IMR-90 (cell line): ENCODE measurements at regions of chr4 and their contacts with region 1.

Region 1: DNA sequence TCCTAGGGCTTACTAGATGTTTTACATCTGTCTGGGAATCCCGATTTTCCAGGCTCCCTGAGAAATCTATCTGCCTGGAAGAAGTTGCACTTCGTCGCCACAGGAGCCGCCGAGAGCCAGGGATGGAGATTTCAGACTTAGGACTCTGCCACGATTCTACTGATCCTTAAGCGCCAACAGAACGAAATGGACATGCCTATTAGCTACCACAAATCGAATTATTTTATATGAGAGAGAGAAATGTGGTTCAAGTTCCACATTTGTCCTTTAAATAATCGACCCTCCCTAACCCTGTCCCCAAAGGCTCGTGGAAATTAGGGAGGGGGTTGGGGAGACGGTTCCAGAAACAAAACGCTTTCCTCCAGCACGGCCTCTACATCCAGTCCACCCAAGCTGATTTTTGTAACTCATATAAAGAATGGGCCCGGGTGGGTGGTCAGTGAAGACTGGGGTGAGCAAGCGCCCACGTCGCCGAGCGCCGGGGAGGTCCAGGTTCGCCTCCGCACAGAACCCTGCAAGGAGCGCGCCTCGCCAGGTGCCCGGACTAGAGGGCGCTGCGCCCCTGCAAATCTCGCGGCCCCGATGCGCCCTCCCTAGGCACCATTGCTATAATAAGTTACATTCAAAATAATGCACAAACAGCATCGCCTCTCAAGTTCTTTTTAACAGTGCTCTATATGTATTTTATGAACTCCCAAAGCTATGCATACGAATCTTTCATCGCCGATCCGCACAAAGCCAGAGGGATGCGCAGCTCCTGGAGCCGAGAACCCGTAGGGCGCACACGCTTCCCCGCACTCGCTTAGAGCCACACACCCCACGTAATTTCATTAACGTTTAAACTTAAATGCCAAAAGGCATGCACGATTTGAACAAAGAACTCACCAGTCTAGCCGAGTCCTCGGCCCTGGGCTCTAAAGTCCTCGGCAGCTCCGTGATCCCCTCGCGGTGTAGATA is 2.1 kb upstream of the FAT1 start:
- DNase-seq: peak; percentile 88
- ATAC-seq: peak; percentile 62
- H3K4me3 ChIP-seq: peak overlapping the region; percentile 89
- H3K27ac ChIP-seq: peak overlapping the region; percentile 97
- H3K4me1 ChIP-seq: peaks cover 10% of the 10 kb centered on the region
- H3K27me3 ChIP-seq: no peaks in the 10 kb centered on the region
- CTCF ChIP-seq: peak; percentile 91
- POLR2A ChIP-seq: peak; percentile 61; the same call in 1 of the 2 replicates
- RAD21 ChIP-seq: peak; percentile 90

Region 2: DNA sequence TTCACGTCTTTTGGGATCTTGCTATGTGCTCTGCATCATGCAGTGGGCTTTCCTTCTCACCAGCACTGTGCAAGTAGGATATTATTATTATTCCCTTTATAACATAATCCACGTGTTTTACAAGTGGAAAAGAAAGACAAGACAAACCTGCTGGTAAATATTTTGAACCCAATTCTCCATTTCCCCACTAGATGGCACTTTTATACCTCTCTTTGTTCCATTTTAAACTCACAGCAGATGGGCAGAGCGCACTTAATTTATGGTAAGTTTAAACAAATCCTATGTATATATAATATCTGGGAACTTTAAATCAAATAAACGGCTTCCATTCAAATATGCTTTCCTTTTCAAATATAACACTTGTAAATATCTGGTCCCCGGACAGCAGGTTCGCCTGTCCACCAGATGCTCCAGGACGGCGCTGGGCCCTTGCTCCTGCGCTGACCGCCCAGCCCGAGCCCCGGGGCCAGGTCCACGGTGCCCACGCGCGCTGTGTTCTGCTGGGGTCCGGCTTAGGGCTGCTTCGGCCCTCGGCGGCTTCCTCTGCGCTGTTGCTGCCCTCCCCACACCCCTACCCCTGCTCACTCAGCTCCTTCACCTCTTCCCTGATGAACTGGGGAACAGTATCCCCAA is 428.6 kb before region 1 on chr4:
- CTCF ChIA-PET with region 1: no interaction called
- POLR2A ChIA-PET with region 1: interaction called, 3 read pairs
- dilution Hi-C with region 1: no loop called
- in situ Hi-C with region 1: no loop called
- intact Hi-C with region 1: loop called (anchors 10 kb)
- DNase-seq: peak; percentile 70
- ATAC-seq: peak; percentile 86
- H3K4me3 ChIP-seq: no peak overlapping the region
- H3K27ac ChIP-seq: no peak overlapping the region
- H3K4me1 ChIP-seq: no peaks in the 10 kb centered on the region
- H3K27me3 ChIP-seq: peaks cover 1% of the 10 kb centered on the region; the same call in 1 of the 2 replicates
- CTCF ChIP-seq: peak; percentile 74
- POLR2A ChIP-seq: no peak
- RAD21 ChIP-seq: peak; percentile 75

Region 3: DNA sequence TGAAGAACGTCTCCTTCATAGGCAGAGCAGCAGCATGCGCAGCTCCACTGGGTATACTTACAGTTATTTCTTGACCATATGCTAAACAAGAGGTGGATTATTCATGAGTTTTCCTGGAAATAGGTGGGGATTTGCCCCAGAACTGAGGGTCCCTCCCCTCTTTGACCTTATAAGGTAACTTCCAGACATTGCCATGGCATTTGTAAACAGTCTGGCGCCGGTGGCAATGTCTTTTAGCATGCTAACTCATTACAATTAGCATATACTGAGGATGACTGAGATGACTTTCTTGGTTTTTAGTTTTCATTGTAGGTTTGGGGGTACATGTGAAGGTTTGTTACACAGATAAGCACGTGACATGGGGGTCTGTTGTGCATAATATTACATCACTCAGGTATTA is 267.7 kb before region 1 on chr4:
- CTCF ChIA-PET with region 1: no interaction called
- POLR2A ChIA-PET with region 1: no interaction called
- dilution Hi-C with region 1: no loop called
- in situ Hi-C with region 1: no loop called
- intact Hi-C with region 1: no loop called
- DNase-seq: no peak
- ATAC-seq: no peak
- H3K4me3 ChIP-seq: no peak overlapping the region
- H3K27ac ChIP-seq: no peak overlapping the region
- H3K4me1 ChIP-seq: no peaks in the 10 kb centered on the region
- H3K27me3 ChIP-seq: no peaks in the 10 kb centered on the region
- CTCF ChIP-seq: no peak
- POLR2A ChIP-seq: no peak
- RAD21 ChIP-seq: no peak

Region 4: DNA sequence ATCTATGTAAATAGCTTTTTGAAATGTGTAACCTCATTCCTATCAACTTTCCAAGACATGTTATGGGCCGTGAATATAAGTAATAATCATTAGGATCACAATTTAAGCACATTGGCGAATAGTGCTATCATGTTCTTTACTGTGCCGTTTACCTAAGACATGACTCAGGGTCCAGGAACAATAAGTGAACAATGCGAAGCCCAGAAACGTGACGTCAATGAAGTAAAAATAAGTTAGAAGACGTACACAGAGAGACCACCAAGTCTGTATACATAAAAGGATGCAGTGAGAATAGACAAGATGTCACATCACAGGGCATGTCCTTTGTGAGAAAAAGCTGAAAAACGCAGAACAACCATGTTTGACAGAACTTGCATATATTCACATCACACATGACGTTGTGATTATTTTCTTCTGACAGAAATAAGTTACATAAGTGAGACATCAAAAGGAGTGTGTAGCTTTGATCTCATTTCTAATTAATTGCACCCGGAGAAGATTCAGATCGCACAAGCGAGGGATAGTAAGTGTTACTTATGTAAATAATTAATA is 47.3 kb after region 1 on chr4:
- CTCF ChIA-PET with region 1: no interaction called
- POLR2A ChIA-PET with region 1: no interaction called
- dilution Hi-C with region 1: no loop called
- in situ Hi-C with region 1: no loop called
- intact Hi-C with region 1: loop called (anchors 2 kb)
- DNase-seq: peak; percentile 86
- ATAC-seq: no peak
- H3K4me3 ChIP-seq: no peak overlapping the region
- H3K27ac ChIP-seq: no peak overlapping the region
- H3K4me1 ChIP-seq: peaks cover 13% of the 10 kb centered on the region
- H3K27me3 ChIP-seq: no peaks in the 10 kb centered on the region
- CTCF ChIP-seq: no peak
- POLR2A ChIP-seq: no peak
- RAD21 ChIP-seq: no peak

Region 5: GRCh38 chr4:186845137-186845842 is 119.5 kb after region 1 on chr4:
- CTCF ChIA-PET with region 1: no interaction called
- POLR2A ChIA-PET with region 1: no interaction called
- dilution Hi-C with region 1: no loop called
- in situ Hi-C with region 1: no loop called
- intact Hi-C with region 1: loop called (anchors 1 kb)
- DNase-seq: peak; percentile 97
- ATAC-seq: peak; percentile 86
- H3K4me3 ChIP-seq: no peak overlapping the region
- H3K27ac ChIP-seq: peak overlapping the region; percentile 79
- H3K4me1 ChIP-seq: peaks cover 20% of the 10 kb centered on the region
- H3K27me3 ChIP-seq: no peaks in the 10 kb centered on the region
- CTCF ChIP-seq: no peak
- POLR2A ChIP-seq: no peak
- RAD21 ChIP-seq: peak; percentile 15; the same call in 1 of the 2 replicates

Region 6: GRCh38 chr4:187075514-187075913 is 349.8 kb after region 1 on chr4:
- CTCF ChIA-PET with region 1: no interaction called
- POLR2A ChIA-PET with region 1: no interaction called
- dilution Hi-C with region 1: no loop called
- in situ Hi-C with region 1: no loop called
- intact Hi-C with region 1: loop called (anchors 5 kb)
- DNase-seq: peak; percentile 22
- ATAC-seq: peak; percentile 72
- H3K4me3 ChIP-seq: no peak overlapping the region
- H3K27ac ChIP-seq: no peak overlapping the region; the same call in 1 of the 2 replicates
- H3K4me1 ChIP-seq: no peaks in the 10 kb centered on the region; the same call in 1 of the 2 replicates
- H3K27me3 ChIP-seq: no peaks in the 10 kb centered on the region
- CTCF ChIP-seq: no peak
- POLR2A ChIP-seq: no peak
- RAD21 ChIP-seq: no peak

Region 7: GRCh38 chr4:187478292-187479140 is 752.8 kb after region 1 on chr4:
- CTCF ChIA-PET with region 1: no interaction called
- POLR2A ChIA-PET with region 1: no interaction called
- dilution Hi-C with region 1: no loop called
- in situ Hi-C with region 1: no loop called
- intact Hi-C with region 1: loop called (anchors 2 kb)
- DNase-seq: peak; percentile 95
- ATAC-seq: peak; percentile 96
- H3K4me3 ChIP-seq: no peak overlapping the region
- H3K27ac ChIP-seq: peak overlapping the region; percentile 75
- H3K4me1 ChIP-seq: peaks cover 23% of the 10 kb centered on the region
- H3K27me3 ChIP-seq: no peaks in the 10 kb centered on the region
- CTCF ChIP-seq: no peak
- POLR2A ChIP-seq: no peak
- RAD21 ChIP-seq: peak; percentile 26; the same call in 1 of the 2 replicates